Adrenal gland (tissue), 19 donors: ENCODE measurements at regions of chr2 and their contacts with region 1.

Region 1: DNA sequence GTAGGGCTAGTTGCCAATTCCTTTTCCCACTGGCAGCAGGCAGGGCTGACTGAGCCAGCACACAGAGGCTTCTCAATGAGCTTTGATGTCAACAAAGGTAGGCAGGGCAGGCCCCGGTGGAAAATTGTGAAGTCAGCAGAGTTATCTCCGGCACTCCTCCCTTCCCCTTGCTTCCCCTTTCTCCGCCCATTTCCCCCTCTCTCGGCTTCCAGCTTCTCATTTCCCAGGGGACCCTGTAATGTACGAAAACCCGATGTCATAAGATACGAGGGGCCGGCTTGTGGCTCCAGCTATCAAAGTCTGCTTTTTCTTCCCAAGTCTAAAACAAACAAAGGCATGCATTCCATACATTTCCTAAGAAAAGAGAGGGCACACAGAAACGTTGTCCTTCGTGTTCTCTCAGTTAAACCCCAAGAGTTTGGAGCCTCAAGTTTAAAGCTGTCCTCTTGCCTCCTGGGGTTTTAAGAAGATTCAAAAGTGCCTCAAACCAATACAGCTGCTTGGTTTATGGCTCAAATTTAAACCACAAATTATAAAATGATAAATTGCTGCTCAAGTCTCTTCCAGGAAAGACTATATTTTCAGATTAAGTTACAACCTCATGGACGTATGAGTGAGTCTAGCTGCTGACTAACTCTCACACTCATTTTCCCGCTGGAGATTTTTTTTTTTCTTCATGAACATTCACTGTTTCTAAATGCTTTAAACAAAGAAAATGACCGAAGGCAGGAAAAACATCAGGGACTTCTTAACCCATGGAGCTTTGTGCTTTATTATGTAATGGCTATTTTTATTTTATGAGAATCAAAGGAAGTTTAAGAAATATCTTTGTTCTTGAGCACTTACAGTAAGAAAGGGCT is 27.2 kb upstream of the EML4 start:
- DNase-seq: peak; percentile 57 to 73 (median 60)
- H3K4me3 ChIP-seq: peak overlapping the region in 1 of 4 donors; percentile 34
- H3K27ac ChIP-seq: peak overlapping the region in 4 of 5 donors; percentile 57 to 92 (median 78)
- H3K4me1 ChIP-seq: peaks cover 27 to 50% of the 10 kb centered on the region in 2 donors
- H3K27me3 ChIP-seq: no peaks in the 10 kb centered on the region
- CTCF ChIP-seq: no peak
- POLR2A ChIP-seq: peak in 1 of 2 donors; percentile 5

Region 2: GRCh38 chr2:42161444-42161843 is 19.5 kb after region 1 on chr2:
- intact Hi-C with region 1: loop called in 1 of 2 experiments (anchors 2 kb)
- DNase-seq: no peak
- H3K4me3 ChIP-seq: no peak overlapping the region
- H3K27ac ChIP-seq: no peak overlapping the region
- H3K4me1 ChIP-seq: no peaks in the 10 kb centered on the region
- H3K27me3 ChIP-seq: no peaks in the 10 kb centered on the region
- CTCF ChIP-seq: no peak
- POLR2A ChIP-seq: no peak